MCF 10A (cell line): ENCODE measurements at regions of chr4 and their contacts with region 1.

Region 1: GRCh38 chr4:176709417-176709816 is 83.3 kb downstream of the VEGFC start:
- DNase-seq: no peak
- H3K4me3 Mint-ChIP-seq: no peak overlapping the region
- H3K27ac Mint-ChIP-seq: peak overlapping the region; percentile 4
- H3K4me1 Mint-ChIP-seq: peaks cover 11% of the 10 kb centered on the region
- H3K27me3 Mint-ChIP-seq: no peaks in the 10 kb centered on the region
- CTCF ChIP-seq: no peak

Region 2: GRCh38 chr4:176443117-176443516 is 266.3 kb before region 1 on chr4:
- CTCF ChIA-PET with region 1: no interaction called
- POLR2A ChIA-PET with region 1: no interaction called
- intact Hi-C with region 1: loop called (anchors 2 kb)
- DNase-seq: peak; percentile 90
- H3K4me3 Mint-ChIP-seq: peak overlapping the region; percentile 61
- H3K27ac Mint-ChIP-seq: peak overlapping the region; percentile 96
- H3K4me1 Mint-ChIP-seq: peaks cover 34% of the 10 kb centered on the region
- H3K27me3 Mint-ChIP-seq: no peaks in the 10 kb centered on the region
- CTCF ChIP-seq: no peak